PC-3 (cell line): ENCODE measurements at regions of chr16 and their contacts with region 1.

Region 1: GRCh38 chr16:19113453-19114351 is at the start of gene ITPRIPL2:
- DNase-seq: peak; percentile 87
- ATAC-seq: peak; percentile 79
- H3K4me3 ChIP-seq: peak within 1 kb of the TSS; percentile 76
- H3K27ac ChIP-seq: peak within 1 kb of the TSS; percentile 88
- H3K4me1 ChIP-seq: peaks cover 52% of the 10 kb centered on the region
- H3K27me3 ChIP-seq: no peaks in the 10 kb centered on the region
- CTCF ChIP-seq: no peak
- total RNA-seq, gene ITPRIPL2: 21.6 and 31.5 TPM in 2 replicates

Region 2: GRCh38 chr16:19167710-19168370 is 54.1 kb after region 1 on chr16 and contains the start of gene SYT17:
- CTCF ChIA-PET with region 1: no interaction called
- POLR2A ChIA-PET with region 1: no interaction called
- intact Hi-C with region 1: loop called (anchors 10 kb)
- DNase-seq: peak; percentile 79
- ATAC-seq: peak; percentile 88
- H3K4me3 ChIP-seq: peak within 1 kb of the TSS; percentile 79
- H3K27ac ChIP-seq: no peak within 1 kb of the TSS
- H3K4me1 ChIP-seq: no peaks in the 10 kb centered on the region
- H3K27me3 ChIP-seq: no peaks in the 10 kb centered on the region
- CTCF ChIP-seq: peak; percentile 65
- total RNA-seq, gene SYT17: 10.8 and 11.8 TPM in 2 replicates